ENCODE measurements at regions of chr5 and their contacts with region 1.

Region 1: DNA sequence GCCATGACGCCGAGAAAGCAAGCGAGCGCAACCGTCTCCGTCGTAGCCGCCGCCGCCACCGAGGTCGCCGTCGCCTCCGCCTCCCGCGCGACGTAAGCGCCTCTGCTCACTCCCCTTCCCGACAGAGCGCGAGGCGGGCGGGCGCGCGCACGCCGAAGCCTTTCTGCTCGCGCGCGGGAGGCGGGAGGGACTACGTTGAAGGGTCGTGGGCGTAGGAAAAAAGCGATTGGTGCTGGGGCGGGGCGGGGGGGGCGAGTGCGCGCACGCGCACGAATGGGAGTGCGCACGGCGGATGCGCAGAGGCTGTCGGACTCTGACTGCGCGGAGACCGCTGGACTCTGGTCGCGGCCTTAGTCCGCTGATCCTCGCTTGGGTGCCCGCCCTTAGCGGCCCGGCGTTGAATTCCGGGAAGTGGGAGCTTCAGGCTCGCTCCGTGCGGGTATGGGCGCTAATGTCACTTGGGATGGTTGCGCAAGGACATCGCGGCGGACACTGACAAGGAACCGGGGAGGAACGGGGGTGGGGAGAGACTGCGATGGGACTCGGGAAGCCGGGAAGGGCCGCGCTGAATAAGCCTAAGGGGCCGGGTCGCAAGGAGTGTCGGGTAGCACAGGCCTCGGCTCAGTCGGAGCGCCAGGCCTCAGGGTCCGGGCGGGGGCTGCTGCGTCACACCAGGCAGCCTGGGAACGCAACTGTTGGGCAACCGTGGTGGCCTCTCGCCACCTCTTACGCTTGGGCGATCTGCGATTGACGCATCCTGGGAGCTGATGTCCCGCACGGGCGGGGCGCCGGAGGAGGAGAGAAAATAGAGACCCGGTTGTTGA is at the start of gene CHD1:
- DNase-seq: peak; percentile 98
- H3K4me3 Mint-ChIP-seq: peak within 1 kb of the TSS; percentile 95
- H3K27ac Mint-ChIP-seq: peak within 1 kb of the TSS; percentile 99
- H3K4me1 Mint-ChIP-seq: peaks cover 40% of the 10 kb centered on the region
- H3K27me3 Mint-ChIP-seq: peaks cover 5% of the 10 kb centered on the region
- total RNA-seq, gene CHD1: 74.2 and 80.6 TPM in 2 replicates

Region 2: GRCh38 chr5:97183100-97183929 is 1745.8 kb before region 1 on chr5 and contains the start of gene RIOK2:
- intact Hi-C with region 1: loop called (anchors 1 kb)
- DNase-seq: peak; percentile 97
- H3K4me3 Mint-ChIP-seq: peak within 1 kb of the TSS; percentile 89
- H3K27ac Mint-ChIP-seq: peak within 1 kb of the TSS; percentile 100
- H3K4me1 Mint-ChIP-seq: peaks cover 24% of the 10 kb centered on the region
- H3K27me3 Mint-ChIP-seq: peaks cover 4% of the 10 kb centered on the region
- total RNA-seq, gene RIOK2: 40.8 and 42.0 TPM in 2 replicates

Region 3: GRCh38 chr5:98905857-98906690 is 23.0 kb before region 1 on chr5:
- intact Hi-C with region 1: loop called (anchors 1 kb)
- DNase-seq: no peak
- H3K4me3 Mint-ChIP-seq: no peak overlapping the region
- H3K27ac Mint-ChIP-seq: peak overlapping the region; percentile 1
- H3K4me1 Mint-ChIP-seq: peaks cover 31% of the 10 kb centered on the region
- H3K27me3 Mint-ChIP-seq: no peaks in the 10 kb centered on the region

Region 4: GRCh38 chr5:99004960-99005359 is 75.9 kb after region 1 on chr5:
- intact Hi-C with region 1: loop called (anchors 2 kb)
- DNase-seq: peak; percentile 63
- H3K4me3 Mint-ChIP-seq: no peak overlapping the region
- H3K27ac Mint-ChIP-seq: no peak overlapping the region
- H3K4me1 Mint-ChIP-seq: peaks cover 9% of the 10 kb centered on the region
- H3K27me3 Mint-ChIP-seq: peaks cover 4% of the 10 kb centered on the region

Region 5: DNA sequence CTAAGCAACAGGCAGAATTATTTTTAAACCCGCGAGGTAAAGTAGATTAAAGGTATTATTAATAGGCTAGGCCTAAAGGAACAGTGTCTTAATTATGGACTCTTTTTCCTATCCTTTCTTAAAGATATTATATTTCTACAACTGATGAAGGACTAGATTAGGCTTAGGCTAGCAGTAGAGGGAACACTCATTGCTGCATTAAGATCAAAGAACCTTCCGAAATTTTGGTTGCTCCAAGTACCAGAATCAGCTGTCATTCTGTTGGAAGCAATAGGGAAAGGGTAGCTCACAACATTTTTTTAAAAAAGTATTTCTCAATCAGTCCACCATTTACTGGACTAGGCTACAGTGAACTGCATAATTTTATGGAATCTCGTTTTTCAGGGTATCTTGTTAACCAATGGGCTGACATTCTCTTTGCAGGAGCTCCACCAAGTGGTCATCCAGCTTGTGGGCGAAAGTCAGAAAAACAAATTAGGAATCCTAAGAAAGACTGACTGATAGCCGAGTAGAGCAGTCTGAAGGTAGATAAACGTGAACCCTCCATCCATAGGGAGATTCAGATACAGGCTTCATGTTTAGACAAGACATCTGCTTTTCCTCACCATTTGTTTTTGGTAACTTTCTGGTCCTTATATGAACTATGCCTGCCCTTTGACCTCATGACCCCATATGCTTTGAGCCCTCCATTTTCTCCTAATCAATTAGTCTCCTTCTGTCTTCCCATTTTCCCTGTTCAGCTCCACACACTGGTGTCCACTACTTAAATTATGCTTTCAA is 103.3 kb after region 1 on chr5:
- intact Hi-C with region 1: loop called (anchors 1 kb)
- DNase-seq: peak; percentile 73
- H3K4me3 Mint-ChIP-seq: peak overlapping the region; percentile 77
- H3K27ac Mint-ChIP-seq: peak overlapping the region; percentile 81
- H3K4me1 Mint-ChIP-seq: peaks cover 61% of the 10 kb centered on the region
- H3K27me3 Mint-ChIP-seq: no peaks in the 10 kb centered on the region

Region 6: DNA sequence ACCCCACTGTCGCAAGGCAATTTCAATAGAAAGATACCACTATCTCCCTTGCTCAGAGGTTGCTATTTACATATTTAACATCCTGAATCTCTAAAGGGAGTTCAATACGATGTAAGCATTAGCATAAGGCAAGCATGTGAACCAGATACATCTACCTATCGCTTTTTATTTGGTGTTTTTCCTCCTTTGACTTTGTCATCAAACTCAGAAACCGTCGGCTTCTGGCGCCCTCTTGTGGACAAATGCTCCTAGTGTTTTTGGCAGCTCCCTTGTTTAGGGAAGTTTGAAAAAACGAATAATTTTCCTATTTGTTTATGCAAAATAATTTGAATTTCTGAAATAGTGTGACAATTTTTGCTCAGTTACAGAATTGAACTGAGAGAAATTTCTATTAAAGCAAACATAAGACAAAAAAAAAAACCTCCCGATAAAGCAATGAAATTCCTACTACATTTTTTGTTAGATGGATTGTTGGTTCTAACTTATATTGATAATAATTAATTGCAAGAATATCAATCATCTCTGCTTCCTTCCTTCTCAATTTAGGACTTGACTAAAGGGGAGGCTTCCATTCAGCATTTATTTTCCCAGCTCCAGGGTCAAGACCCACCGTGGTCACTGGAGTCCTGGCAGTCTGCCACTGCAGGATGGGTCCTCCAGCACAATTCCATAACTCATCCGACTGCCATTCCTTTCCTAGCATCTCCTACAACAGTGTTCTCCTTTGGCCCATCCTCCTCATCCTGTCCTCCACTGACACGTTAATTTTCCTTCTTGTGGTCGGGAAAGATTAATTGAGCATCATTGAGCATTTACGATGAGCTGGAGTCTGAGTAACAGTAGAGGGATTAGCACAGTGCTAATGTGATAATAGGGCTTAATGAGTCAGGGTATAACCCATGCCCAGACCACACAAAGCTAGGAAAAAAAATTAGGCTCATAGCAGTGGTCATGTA is 131.5 kb after region 1 on chr5:
- intact Hi-C with region 1: loop called (anchors 5 kb)
- DNase-seq: peak; percentile 95
- H3K4me3 Mint-ChIP-seq: no peak overlapping the region
- H3K27ac Mint-ChIP-seq: no peak overlapping the region
- H3K4me1 Mint-ChIP-seq: peaks cover 1% of the 10 kb centered on the region
- H3K27me3 Mint-ChIP-seq: peaks cover 17% of the 10 kb centered on the region

Measured in activated CD4-positive, alpha-beta T cell treated with anti-CD3 and anti-CD28 coated beads, Interleukin-2, amount 10 ng/mL, durations not matched to agents 24 days and 14 days (primary cell).